GM12878 (cell line): ENCODE measurements at regions of chr11 and their contacts with region 1.

Region 1: DNA sequence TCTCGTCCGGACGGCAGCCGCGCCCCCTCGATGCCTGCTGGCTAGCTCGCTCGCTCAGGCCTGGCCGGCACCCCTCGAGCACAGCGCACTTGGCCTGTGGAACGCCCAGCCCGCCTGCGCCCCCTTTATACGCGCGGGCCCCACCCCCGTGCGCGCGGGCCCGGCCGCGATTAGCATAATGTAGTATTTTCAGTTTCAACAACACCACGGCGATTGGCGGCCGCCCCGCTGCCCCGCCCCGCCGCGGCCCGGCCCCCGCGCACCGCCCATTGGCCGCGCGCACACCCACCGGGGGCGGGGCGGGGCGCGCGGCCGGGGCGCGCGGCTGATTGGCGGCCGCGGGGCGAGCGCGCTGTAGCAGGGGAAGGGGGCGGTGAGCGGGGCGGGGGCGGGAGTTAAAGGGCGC is at the start of gene CDKN1C:
- DNase-seq: no peak
- ATAC-seq: peak; percentile 88
- H3K4me3 ChIP-seq: peak within 1 kb of the TSS; percentile 59; the same call in 1 of the 2 replicates
- H3K27ac ChIP-seq: no peak within 1 kb of the TSS
- H3K4me1 ChIP-seq: peaks cover 5% of the 10 kb centered on the region
- H3K27me3 ChIP-seq: peaks cover 9 to 10% of the 10 kb centered on the region in 2 experiments; a peak in 3 of 4 replicates
- CTCF ChIP-seq: no peak
- EP300 ChIP-seq: no peak
- POLR2A ChIP-seq: peak; percentile 66
- RAD21 ChIP-seq: no peak
- polyA plus RNA-seq, gene CDKN1C: not detected

Region 2: DNA sequence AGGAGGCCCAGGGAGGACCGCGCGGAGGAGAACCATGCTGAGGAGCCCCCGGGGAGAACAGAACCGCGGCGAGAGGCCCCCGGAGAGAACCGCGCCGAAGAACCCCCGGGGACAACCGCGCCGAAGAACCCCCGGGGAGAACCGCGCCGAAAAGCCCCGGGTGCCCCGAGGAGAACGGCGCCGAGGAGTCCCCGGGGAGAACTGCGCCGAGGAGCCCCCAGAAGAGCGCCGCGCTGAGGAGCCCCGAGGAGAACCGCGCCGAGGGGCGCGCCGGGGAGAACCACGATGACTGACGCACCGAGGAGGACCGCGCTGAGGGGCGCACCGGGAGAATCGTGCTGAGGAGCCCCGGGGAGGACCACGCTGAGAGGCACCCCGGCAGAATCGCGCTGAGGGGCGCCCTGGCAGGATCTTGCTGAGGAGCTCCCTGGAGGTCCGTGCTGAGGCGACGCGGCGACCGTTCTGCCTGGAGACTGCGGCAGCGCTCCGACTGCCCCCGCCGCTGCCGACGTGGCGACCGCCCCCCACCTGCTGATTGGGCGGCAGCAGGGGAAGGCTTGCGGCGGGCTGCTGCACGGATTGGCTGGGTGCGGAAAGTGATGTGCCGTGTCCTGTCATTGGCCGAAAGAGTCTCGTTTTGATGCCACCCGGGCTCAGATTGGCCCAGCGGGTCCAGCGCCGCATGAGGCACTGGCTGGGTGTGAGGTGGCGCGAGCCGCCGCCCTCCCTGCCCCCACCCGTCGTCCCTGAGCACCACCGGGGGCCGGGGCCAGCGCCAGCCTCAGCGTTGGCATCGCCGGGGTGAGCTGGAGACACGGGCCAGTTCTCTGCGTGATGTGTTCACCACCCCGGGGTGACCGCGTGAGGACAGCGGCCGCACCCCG is 185.9 kb before region 1 on chr11 and contains the start of gene KCNQ1OT1:
- CTCF ChIA-PET with region 1: no interaction called
- POLR2A ChIA-PET with region 1: no interaction called
- RAD21 ChIA-PET with region 1: no interaction called
- SMC1A ChIA-PET with region 1: interaction called, 5 read pairs
- in situ Hi-C with region 1: no loop called
- intact Hi-C with region 1: loop called (anchors 2 kb)
- DNase-seq: peak; percentile 86
- ATAC-seq: peak; percentile 94
- H3K4me3 ChIP-seq: peak within 1 kb of the TSS; percentile 73
- H3K27ac ChIP-seq: peak within 1 kb of the TSS; percentile 82
- H3K4me1 ChIP-seq: no peaks in the 10 kb centered on the region; the same call in 1 of the 2 replicates
- H3K27me3 ChIP-seq: no peaks in the 10 kb centered on the region; a peak in 1 of 4 replicates
- CTCF ChIP-seq: no peak
- EP300 ChIP-seq: no peak
- POLR2A ChIP-seq: peak; percentile 100
- RAD21 ChIP-seq: no peak
- polyA plus RNA-seq, gene KCNQ1OT1: 0.02 to 0.13 TPM

Region 3: DNA sequence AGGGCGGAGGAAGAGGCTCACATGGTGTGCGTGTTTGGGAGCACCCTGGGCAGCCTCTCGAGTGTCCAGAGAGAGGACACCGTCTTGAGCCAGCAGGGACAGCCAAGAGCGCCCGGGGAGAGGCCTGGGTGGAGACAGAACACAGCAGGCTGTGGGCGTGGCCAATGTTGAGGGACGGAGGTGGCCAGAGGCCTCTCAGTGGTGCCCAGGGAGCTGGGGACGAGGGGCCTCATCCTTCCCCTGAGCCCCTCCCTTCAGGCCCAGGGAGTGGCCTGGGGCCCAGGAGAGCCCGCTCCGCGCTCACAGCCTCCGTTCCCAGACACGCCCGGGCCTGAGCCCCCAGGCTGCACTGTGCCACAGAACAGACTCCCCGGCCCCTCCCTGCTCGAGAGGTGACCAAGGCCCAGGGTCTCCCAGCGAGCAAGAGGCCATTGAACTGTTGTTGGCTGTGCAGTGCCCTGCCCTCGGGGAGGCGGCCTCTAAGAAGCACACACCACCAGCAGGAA is 48.5 kb before region 1 on chr11:
- CTCF ChIA-PET with region 1: no interaction called
- POLR2A ChIA-PET with region 1: no interaction called
- RAD21 ChIA-PET with region 1: no interaction called
- SMC1A ChIA-PET with region 1: no interaction called
- in situ Hi-C with region 1: no loop called
- intact Hi-C with region 1: no loop called
- DNase-seq: no peak
- ATAC-seq: no peak
- H3K4me3 ChIP-seq: no peak overlapping the region
- H3K27ac ChIP-seq: no peak overlapping the region
- H3K4me1 ChIP-seq: no peaks in the 10 kb centered on the region
- H3K27me3 ChIP-seq: no peaks in the 10 kb centered on the region; a peak in 1 of 4 replicates
- CTCF ChIP-seq: no peak
- EP300 ChIP-seq: no peak
- POLR2A ChIP-seq: no peak
- RAD21 ChIP-seq: no peak